Astrocyte of the cerebellum (primary cell): ENCODE measurements at regions of chr14 and their contacts with region 1.

Region 1: GRCh38 chr14:34453229-34453628 is 8.8 kb downstream of the SPTSSA start:
- DNase-seq: no peak
- H3K4me3 ChIP-seq: no peak overlapping the region
- CTCF ChIP-seq: no peak

Region 2: DNA sequence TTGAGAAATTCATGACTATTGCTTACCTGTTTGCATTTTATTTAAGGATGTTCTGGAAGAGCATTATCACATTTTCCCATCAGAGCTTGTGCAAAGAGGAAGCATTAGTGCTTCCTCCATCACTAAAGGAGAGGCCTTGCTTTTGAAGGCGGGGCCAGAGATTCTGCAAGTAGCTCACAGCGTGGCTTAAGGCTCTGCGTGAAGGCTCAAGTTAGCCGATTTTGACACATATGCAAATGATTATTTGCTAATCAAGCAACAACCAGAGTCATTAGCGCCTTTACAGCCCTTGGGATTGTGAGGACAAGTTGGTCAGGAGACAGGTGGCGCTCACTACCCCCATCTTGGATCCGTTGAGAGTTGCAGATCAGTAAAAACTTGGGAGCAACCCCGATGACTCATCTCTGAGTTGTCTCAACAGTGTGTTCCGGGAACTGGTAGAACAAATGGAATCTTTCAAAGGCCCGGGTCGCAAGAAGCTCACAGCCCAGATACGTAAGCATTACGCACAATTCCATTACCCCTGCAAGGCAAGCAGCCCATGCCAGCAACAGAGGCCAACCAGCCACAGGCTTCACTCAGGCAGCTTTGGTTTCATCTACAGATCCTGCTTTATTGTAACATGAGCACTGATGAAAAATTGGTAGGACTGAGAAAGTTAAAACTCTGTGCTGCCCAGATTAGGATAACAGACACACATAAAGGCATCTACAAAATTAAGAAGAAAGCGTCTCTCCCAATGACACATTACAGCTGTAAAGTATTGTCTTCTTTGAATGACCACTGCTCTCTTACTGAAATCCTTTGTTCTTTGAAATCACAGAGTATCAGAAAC is 43.7 kb after region 1 on chr14:
- in situ Hi-C with region 1: no loop called
- DNase-seq: peak; percentile 99
- H3K4me3 ChIP-seq: no peak overlapping the region
- CTCF ChIP-seq: peak; percentile 36

Region 3: DNA sequence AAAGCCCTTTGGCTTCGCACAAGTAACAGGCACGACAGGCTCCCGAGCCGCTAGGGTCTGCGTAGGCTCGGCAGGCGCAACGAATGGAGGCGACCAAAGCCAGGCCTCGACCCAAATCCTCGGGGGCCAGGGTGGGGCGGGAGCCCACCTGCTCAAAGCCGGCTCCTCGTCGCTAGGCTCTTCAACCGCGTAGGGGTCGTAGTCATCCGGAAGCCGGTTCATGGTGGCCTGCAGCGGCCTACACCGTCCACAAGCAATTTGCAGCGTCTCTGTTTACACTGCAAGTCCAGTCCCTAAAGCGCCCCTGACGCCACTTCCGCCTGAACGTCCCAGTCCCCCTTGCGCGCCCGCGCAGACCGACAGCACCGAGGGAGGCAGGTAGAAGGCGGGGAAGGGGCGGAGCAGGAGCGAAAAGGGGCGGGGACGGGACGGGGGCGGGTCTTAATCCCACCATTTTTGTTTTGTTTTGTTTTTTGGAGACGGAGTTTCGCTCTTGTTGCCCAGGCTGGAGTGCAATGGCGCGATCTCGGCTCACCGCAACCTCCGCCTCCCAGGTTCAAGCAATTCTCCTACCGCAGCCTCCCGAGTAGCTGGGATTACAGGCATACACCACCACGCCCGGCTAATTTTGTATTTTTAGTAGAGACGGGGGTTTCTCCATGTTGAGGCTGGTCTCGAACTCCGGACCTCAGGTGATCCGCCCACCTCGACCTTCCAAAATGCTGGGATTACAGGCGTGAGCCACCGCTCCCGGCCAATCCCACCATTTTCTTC is 86.4 kb after region 1 on chr14 and contains the start of gene EAPP:
- in situ Hi-C with region 1: loop called (anchors 5 kb)
- DNase-seq: peak; percentile 91
- H3K4me3 ChIP-seq: peak within 1 kb of the TSS; percentile 74
- CTCF ChIP-seq: no peak